ENCODE measurements at regions of chr11 and their contacts with region 1.

Region 1: DNA sequence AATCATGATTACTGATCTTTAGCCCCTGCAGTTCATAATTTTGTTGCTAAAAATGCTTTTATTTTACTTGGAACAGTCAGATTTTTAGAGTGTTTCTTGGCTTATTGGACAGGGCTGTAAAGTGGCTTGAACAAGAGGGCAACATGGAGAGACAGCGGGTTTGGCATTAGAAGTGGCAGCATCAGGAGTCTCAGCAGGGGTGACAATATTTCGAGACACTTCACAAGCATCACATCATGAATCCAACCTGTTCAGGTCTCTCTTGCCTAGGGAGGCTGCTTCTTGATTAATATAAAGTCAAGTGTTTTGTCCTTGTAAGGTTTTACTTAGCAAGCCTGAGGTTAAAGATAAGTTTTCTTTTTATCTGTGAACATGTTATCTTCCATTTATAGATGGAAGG is 2249.5 kb downstream of the LRRC4C start:
- DNase-seq: no peak
- ATAC-seq: no peak
- H3K4me3 ChIP-seq: no peak overlapping the region
- H3K27ac ChIP-seq: no peak overlapping the region
- H3K4me1 ChIP-seq: no peaks in the 10 kb centered on the region
- H3K27me3 ChIP-seq: no peaks in the 10 kb centered on the region
- CTCF ChIP-seq: no peak

Region 2: DNA sequence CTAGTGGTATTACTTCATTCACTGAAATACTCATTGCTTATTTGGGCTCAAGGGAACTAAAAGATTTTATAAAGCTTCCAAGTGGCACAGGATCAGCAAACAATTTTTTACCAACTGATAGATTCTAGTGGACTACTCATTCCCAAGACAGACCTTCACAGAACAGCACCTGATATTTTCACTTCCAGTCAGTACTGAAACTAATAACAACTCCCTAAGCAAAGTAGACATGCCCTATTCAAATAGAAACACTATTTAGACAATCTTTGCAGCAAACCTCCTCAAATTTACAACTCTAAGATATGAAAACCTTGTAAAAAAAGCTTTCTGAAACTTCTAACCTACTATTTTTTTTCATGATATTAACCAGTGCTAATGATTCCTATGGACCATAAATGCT is 96.4 kb before region 1 on chr11:
- intact Hi-C with region 1: no loop called
- DNase-seq: no peak
- ATAC-seq: no peak
- H3K4me3 ChIP-seq: no peak overlapping the region
- H3K27ac ChIP-seq: no peak overlapping the region
- H3K4me1 ChIP-seq: no peaks in the 10 kb centered on the region
- H3K27me3 ChIP-seq: no peaks in the 10 kb centered on the region
- CTCF ChIP-seq: no peak

Region 3: GRCh38 chr11:39174196-39174595 is 35.8 kb before region 1 on chr11:
- intact Hi-C with region 1: no loop called
- DNase-seq: no peak
- ATAC-seq: no peak
- H3K4me3 ChIP-seq: no peak overlapping the region
- H3K27ac ChIP-seq: no peak overlapping the region
- H3K4me1 ChIP-seq: no peaks in the 10 kb centered on the region
- H3K27me3 ChIP-seq: no peaks in the 10 kb centered on the region
- CTCF ChIP-seq: no peak

Region 4: DNA sequence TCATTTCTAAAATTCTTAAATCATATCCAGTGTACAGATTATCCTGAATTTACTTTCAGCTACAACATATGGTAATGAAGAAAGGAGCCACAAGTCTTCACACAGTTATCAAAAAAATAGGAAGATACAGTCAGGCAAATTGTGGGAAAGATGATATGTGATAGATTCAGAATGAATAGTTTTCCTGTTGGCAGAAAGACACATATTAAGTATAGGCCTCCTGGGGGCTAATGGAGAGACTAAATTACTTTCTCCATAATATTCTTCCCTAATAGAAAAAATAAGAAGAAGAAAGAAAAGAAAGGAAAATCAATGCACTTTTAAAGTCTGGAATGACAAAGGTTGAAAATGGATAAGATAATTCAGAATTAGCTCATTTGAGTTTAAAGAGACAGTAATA is 175.9 kb after region 1 on chr11:
- intact Hi-C with region 1: no loop called
- DNase-seq: no peak
- ATAC-seq: no peak
- H3K4me3 ChIP-seq: no peak overlapping the region
- H3K27ac ChIP-seq: no peak overlapping the region
- H3K4me1 ChIP-seq: no peaks in the 10 kb centered on the region
- H3K27me3 ChIP-seq: no peaks in the 10 kb centered on the region
- CTCF ChIP-seq: no peak

Region 5: DNA sequence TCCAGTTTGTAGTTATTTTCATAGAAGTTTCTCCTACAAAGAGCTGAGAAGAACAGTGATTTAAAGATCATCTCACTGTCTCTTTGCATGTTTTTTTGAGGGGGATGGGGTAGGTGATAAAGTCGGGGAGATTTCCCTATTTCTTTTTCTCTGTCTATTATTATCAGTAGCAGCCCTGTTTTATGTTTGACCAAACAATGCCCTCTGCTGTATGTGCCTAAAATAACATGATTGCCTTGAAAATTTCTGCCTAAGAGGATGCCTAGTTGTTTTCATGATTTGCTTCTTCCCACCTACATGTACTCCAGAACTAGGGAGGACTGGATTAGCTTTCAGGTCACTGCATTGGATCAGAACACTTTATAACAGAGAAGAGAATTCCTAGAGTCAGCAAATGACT is 919.3 kb after region 1 on chr11:
- intact Hi-C with region 1: loop called in 1 of 2 experiments (anchors 10 kb)
- DNase-seq: no peak
- ATAC-seq: no peak
- H3K4me3 ChIP-seq: no peak overlapping the region
- H3K27ac ChIP-seq: no peak overlapping the region
- H3K4me1 ChIP-seq: no peaks in the 10 kb centered on the region
- H3K27me3 ChIP-seq: no peaks in the 10 kb centered on the region
- CTCF ChIP-seq: no peak

Measured in psoas muscle (tissue), 8 donors.